Heart left ventricle (tissue), 16 donors: ENCODE measurements at regions of chr12 and their contacts with region 1.

Region 1: GRCh38 chr12:53543539-53543938 is 36.3 kb upstream of the NPFF start:
- DNase-seq: peak in 4 of 5 donors; percentile 39 to 71 (median 50)
- ATAC-seq: peak; percentile 79 to 94 (median 92)
- H3K4me3 ChIP-seq: no peak overlapping the region
- H3K27ac ChIP-seq: peak overlapping the region in 10 of 12 donors; percentile 4 to 64 (median 34)
- H3K4me1 ChIP-seq: peaks cover 0 to 18% (median 9%) of the 10 kb centered on the region in 12 donors
- H3K27me3 ChIP-seq: no peaks in the 10 kb centered on the region
- CTCF ChIP-seq: peak; percentile 70 to 97 (median 84)
- POLR2A ChIP-seq: no peak

Region 2: GRCh38 chr12:53500776-53501614 is 42.5 kb before region 1 on chr12 and contains the start of gene TARBP2:
- intact Hi-C with region 1: no loop called
- DNase-seq: peak; percentile 97 to 98 (median 98)
- ATAC-seq: peak; percentile 86 to 92 (median 88)
- H3K4me3 ChIP-seq: peak within 1 kb of the TSS; percentile 37 to 98 (median 77)
- H3K27ac ChIP-seq: peak within 1 kb of the TSS; percentile 90 to 100 (median 97)
- H3K4me1 ChIP-seq: peaks cover 5 to 61% (median 35%) of the 10 kb centered on the region in 12 donors
- H3K27me3 ChIP-seq: no peaks in the 10 kb centered on the region
- CTCF ChIP-seq: peak in 4 of 12 donors; percentile 13 to 34 (median 24)
- POLR2A ChIP-seq: peak in 1 of 2 donors; percentile 46
- total RNA-seq, gene TARBP2: 7.8 to 19.5 (median 10.1) TPM

Region 3: DNA sequence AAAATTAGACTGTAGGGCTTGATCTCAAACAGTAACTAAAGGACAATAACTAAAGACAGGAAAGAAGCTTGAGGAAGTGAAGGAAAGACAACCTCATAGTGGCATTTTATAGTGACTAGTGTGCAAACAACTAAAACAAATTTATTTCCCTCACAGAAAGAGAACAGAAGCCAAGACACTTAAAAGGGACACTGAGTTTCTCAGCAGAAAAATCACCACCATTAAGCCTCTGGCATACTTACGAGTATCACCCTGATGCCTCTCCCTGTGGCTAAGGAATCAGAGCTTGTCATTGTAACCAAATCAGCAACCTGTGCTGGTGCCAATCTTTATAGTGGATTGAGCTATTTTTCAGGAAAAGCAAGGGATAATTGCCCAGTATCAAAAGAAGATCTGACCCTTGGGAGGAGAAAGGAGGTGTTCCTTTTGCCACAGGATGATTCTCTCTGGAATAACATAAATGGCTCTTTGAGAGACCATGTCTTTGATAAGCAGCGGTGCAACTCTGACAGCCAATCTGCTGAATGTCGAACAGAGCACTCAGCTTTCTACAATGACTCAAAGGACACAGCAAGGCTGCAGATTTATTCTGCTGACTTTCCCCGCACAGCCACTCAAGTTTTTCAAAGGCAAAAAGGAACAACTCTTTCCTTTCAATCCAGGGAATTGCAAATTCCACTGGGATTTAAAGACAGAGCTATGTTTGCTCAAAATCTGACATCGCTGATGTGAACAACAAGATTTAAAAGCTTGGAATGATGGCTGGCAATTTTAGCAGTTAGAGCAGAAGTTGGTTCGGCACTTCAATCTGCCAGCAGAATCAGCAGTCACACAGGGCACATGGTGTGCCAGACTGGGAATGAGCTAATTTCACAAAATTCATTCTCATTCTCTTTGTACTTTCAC is 48.0 kb after region 1 on chr12:
- intact Hi-C with region 1: loop called in 1 of 10 experiments (anchors 5 kb)
- DNase-seq: peak in 1 of 5 donors; percentile 38
- ATAC-seq: peak; percentile 38 to 81 (median 73)
- H3K4me3 ChIP-seq: peak overlapping the region in 9 of 12 donors; percentile 14 to 32 (median 23)
- H3K27ac ChIP-seq: peak overlapping the region; percentile 53 to 84 (median 68)
- H3K4me1 ChIP-seq: peaks cover 0 to 82% (median 64%) of the 10 kb centered on the region in 12 donors
- H3K27me3 ChIP-seq: no peaks in the 10 kb centered on the region
- CTCF ChIP-seq: no peak
- POLR2A ChIP-seq: no peak

Region 4: GRCh38 chr12:53625946-53626701 is 82.6 kb after region 1 on chr12 and contains the start of gene ATF7:
- intact Hi-C with region 1: loop called in 5 of 10 experiments (anchors 2 to 10 kb)
- DNase-seq: peak; percentile 98 to 99 (median 98)
- ATAC-seq: peak; percentile 98 to 99 (median 98)
- H3K4me3 ChIP-seq: peak within 1 kb of the TSS; percentile 49 to 94 (median 71)
- H3K27ac ChIP-seq: peak within 1 kb of the TSS; percentile 88 to 98 (median 96)
- H3K4me1 ChIP-seq: peaks cover 0 to 48% (median 29%) of the 10 kb centered on the region in 12 donors
- H3K27me3 ChIP-seq: no peaks in the 10 kb centered on the region
- CTCF ChIP-seq: peak in 1 of 12 donors; percentile 9
- POLR2A ChIP-seq: peak in 1 of 2 donors; percentile 76
- total RNA-seq, gene ATF7: 21.1 to 43.2 (median 32.0) TPM

Region 5: DNA sequence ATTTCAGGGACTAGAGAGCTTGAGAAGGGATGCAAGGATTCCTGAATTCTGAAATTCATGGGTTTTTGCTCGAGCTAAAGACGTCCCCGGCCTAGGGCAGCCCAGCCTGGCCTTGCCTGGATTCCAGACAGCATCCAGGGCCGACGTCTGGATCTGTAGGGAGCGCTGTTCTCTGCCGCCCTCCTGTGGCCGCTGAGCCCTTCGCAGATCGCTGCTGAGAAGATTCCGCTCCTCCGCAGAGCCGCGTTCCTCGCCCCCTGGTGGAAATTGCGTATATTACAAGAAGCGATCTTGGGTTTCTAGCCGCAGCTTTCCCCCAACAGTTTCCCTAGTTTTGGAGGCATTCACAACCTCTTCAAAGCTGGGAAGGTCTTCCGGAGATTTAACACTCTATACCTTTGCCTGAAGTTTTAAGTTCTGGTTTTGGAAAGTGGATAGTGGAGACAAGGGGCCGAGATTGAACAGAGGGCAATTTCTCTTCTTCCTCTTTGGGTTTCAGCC is 203.1 kb after region 1 on chr12:
- intact Hi-C with region 1: loop called in 7 of 10 experiments (anchors 2 to 10 kb)
- DNase-seq: peak; percentile 91 to 95 (median 93)
- ATAC-seq: peak; percentile 84 to 92 (median 88)
- H3K4me3 ChIP-seq: peak overlapping the region in 2 of 12 donors; percentile 7 to 18
- H3K27ac ChIP-seq: no peak overlapping the region
- H3K4me1 ChIP-seq: peaks cover 0 to 24% (median 14%) of the 10 kb centered on the region in 12 donors
- H3K27me3 ChIP-seq: peaks cover 0 to 71% (median 17%) of the 10 kb centered on the region in 9 donors
- CTCF ChIP-seq: peak; percentile 99 to 100 (median 100)
- POLR2A ChIP-seq: no peak